ENCODE measurements at regions of chr12 and their contacts with region 1.

Region 1: GRCh38 chr12:104877123-104877705 is 80.9 kb downstream of the SLC41A2 start:
- DNase-seq: peak; percentile 19
- H3K4me3 ChIP-seq: no peak overlapping the region
- H3K27ac ChIP-seq: no peak overlapping the region
- H3K4me1 ChIP-seq: no peaks in the 10 kb centered on the region
- H3K27me3 ChIP-seq: no peaks in the 10 kb centered on the region
- CTCF ChIP-seq: peak; percentile 22 to 75 (median 47)
- POLR2A ChIP-seq: no peak

Region 2: DNA sequence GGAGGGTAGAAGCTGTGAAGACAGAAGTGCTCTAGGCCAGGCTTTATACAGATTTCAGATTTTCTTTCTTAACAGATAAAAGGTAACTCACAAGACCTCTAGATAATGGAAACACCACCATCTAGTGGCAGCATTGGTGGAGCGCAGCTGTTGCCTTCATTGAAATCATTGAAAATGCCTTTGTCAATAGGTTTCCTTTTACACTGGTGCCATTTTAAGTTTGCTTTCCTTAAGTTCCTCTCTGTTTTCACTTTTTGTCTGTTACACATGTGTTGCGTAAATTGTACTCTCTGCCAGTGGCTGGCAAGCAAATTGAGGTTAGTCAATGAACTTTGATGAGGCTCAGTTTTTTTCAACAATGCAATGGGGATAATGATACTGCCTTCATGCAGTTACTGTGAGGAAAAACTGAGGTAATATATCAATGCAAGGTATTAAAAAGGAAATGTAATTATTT is 175.9 kb after region 1 on chr12:
- intact Hi-C with region 1: loop called (anchors 10 kb)
- DNase-seq: peak; percentile 66
- H3K4me3 ChIP-seq: no peak overlapping the region
- H3K27ac ChIP-seq: no peak overlapping the region
- H3K4me1 ChIP-seq: no peaks in the 10 kb centered on the region
- H3K27me3 ChIP-seq: no peaks in the 10 kb centered on the region
- CTCF ChIP-seq: peak; percentile 50 to 88 (median 84)
- POLR2A ChIP-seq: no peak

Measured in prostate gland (tissue), 2 donors.